CD8-positive, alpha-beta memory T cell (primary cell): ENCODE measurements at regions of chr19 and their contacts with region 1.

Region 1: GRCh38 chr19:7098701-7099596 is 29.4 kb downstream of the ZNF557 start:
- DNase-seq: peak; percentile 74 to 91 (median 82)
- H3K4me3 ChIP-seq: peak overlapping the region; percentile 85
- H3K4me3 Mint-ChIP-seq: peak overlapping the region; percentile 91 to 97 (median 94)
- H3K27ac ChIP-seq: peak overlapping the region; percentile 74
- H3K27ac Mint-ChIP-seq: peak overlapping the region; percentile 88 to 99 (median 92)
- H3K4me1 ChIP-seq: peaks cover 16% of the 10 kb centered on the region
- H3K4me1 Mint-ChIP-seq: peaks cover 21 to 30% (median 28%) of the 10 kb centered on the region in 3 donors
- H3K27me3 ChIP-seq: no peaks in the 10 kb centered on the region
- H3K27me3 Mint-ChIP-seq: peaks cover 3 to 8% of the 10 kb centered on the region in 2 donors

Region 2: GRCh38 chr19:7069042-7069903 is 29.7 kb before region 1 on chr19 and contains the start of gene ZNF557:
- CTCF ChIA-PET with region 1: interaction called, 4 read pairs
- POLR2A ChIA-PET with region 1: interaction called, 25 read pairs
- DNase-seq: peak; percentile 99 to 100 (median 99)
- H3K4me3 ChIP-seq: peak within 1 kb of the TSS; percentile 99
- H3K4me3 Mint-ChIP-seq: peak within 1 kb of the TSS; percentile 93 to 98 (median 95)
- H3K27ac ChIP-seq: peak within 1 kb of the TSS; percentile 93
- H3K27ac Mint-ChIP-seq: peak within 1 kb of the TSS; percentile 81 to 98 (median 94)
- H3K4me1 ChIP-seq: peaks cover 17% of the 10 kb centered on the region
- H3K4me1 Mint-ChIP-seq: peaks cover 21 to 31% (median 22%) of the 10 kb centered on the region in 3 donors
- H3K27me3 ChIP-seq: no peaks in the 10 kb centered on the region
- H3K27me3 Mint-ChIP-seq: peaks cover 0 to 1% of the 10 kb centered on the region in 2 donors
- total RNA-seq, gene ZNF557: 12.0 to 12.7 TPM